SK-N-SH (cell line): ENCODE measurements at regions of chr4 and their contacts with region 1.

Region 1: GRCh38 chr4:1809754-1810511 is 16.8 kb downstream of the FGFR3 start:
- DNase-seq: peak; percentile 96
- H3K4me3 ChIP-seq: peak overlapping the region in 1 of 2 experiments; percentile 42; a peak in 1 of 4 replicates
- H3K27ac ChIP-seq: no peak overlapping the region
- H3K4me1 ChIP-seq: peaks cover 0 to 3% of the 10 kb centered on the region in 2 experiments; a peak in 1 of 4 replicates
- H3K27me3 ChIP-seq: no peaks in the 10 kb centered on the region
- CTCF ChIP-seq: peak; percentile 93
- EP300 ChIP-seq: no peak
- RAD21 ChIP-seq: peak; percentile 92

Region 2: DNA sequence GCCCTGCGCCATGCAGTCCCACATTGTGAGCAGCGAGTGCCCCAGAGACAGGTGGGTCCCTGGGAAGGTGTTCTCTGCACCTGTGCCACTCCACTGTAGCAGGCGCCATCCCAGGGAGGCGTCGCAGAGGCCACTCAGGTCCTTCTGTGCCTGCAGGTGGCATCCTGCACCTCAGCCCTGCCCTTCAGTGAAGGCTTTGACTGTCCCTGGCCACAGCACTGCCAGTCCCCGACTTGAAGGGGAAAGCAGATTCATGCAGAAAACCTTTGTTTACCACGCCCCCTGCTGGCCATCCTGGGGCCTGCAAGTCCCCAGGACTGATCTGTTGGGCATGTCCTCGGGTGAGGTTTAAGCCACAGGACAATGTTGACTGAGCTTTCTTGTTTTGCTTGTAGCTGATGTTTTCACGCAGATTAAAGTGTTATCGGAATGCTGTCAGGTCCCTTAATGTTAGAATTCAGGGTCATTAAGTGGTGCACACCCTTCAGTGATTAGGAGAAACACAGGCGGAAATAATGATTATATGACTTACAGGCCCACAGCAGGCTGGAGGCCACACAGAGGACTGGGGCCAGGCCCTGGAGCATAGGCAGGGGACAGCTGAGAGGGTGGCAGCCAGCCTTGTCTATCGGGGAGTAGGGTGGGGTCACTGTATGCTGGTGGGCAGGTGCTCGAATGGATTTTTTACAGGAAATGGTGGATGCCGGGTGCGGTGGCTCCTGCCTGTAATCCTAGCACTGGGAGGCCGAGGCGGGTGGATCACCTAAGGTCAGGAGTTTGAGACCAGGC is 83.6 kb before region 1 on chr4:
- CTCF ChIA-PET with region 1: interaction called, 17 read pairs
- POLR2A ChIA-PET with region 1: no interaction called
- DNase-seq: peak; percentile 89
- H3K4me3 ChIP-seq: peak overlapping the region in 1 of 2 experiments; percentile 22; a peak in 1 of 4 replicates
- H3K27ac ChIP-seq: peak overlapping the region; percentile 73 to 82
- H3K4me1 ChIP-seq: peaks cover 26 to 28% of the 10 kb centered on the region in 2 experiments; a peak in 3 of 4 replicates
- H3K27me3 ChIP-seq: no peaks in the 10 kb centered on the region
- CTCF ChIP-seq: peak; percentile 97
- EP300 ChIP-seq: no peak
- RAD21 ChIP-seq: peak; percentile 82

Region 3: GRCh38 chr4:1752284-1753041 is 57.5 kb before region 1 on chr4:
- CTCF ChIA-PET with region 1: interaction called, 166 read pairs
- POLR2A ChIA-PET with region 1: no interaction called
- DNase-seq: no peak
- H3K4me3 ChIP-seq: no peak overlapping the region
- H3K27ac ChIP-seq: no peak overlapping the region
- H3K4me1 ChIP-seq: peaks cover 0 to 35% of the 10 kb centered on the region in 2 experiments; a peak in 1 of 4 replicates
- H3K27me3 ChIP-seq: no peaks in the 10 kb centered on the region
- CTCF ChIP-seq: no peak
- EP300 ChIP-seq: no peak
- RAD21 ChIP-seq: no peak

Region 4: GRCh38 chr4:1777822-1778641 is 31.9 kb before region 1 on chr4:
- CTCF ChIA-PET with region 1: interaction called, 29 read pairs
- POLR2A ChIA-PET with region 1: no interaction called
- DNase-seq: no peak
- H3K4me3 ChIP-seq: no peak overlapping the region
- H3K27ac ChIP-seq: no peak overlapping the region
- H3K4me1 ChIP-seq: peaks cover 0 to 27% of the 10 kb centered on the region in 2 experiments; a peak in 1 of 4 replicates
- H3K27me3 ChIP-seq: no peaks in the 10 kb centered on the region
- CTCF ChIP-seq: no peak
- EP300 ChIP-seq: no peak
- RAD21 ChIP-seq: no peak

Region 5: DNA sequence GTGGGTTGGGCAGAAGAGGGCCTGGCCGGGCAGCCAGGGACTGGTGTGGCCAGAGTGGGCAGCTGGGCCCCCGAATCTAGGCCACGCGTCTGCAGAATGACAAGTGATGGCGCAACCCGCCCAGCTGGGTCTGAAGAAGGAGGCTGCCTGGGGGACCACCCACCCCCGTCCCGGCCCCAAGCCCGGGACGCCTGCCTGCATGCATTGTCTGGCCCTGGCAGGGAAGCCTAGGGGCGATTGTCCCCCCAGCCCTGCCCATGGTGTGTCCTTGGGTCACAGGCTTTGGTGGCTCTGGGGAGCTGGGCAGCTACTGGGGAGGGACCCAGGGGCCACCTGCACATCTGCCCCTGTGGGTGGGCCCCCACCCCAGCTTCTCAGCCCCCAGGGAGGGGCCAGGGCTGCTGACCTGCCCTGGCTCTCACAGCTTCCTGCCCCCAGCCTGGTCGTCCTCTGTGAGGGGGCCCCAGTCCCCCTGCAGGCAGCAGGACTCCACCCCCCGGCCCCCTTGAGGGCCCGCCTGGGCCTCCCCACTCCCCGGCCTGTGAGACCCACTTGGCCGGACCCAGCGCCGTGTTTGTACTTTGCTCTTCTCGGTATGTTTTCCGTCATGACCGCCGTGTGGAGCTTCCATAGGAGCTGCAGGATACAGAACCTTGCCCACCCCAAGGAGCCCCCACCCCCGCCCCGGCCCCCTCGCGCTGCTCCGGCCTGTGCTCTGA is 11.9 kb before region 1 on chr4:
- CTCF ChIA-PET with region 1: interaction called, 35 read pairs
- POLR2A ChIA-PET with region 1: no interaction called
- DNase-seq: no peak
- H3K4me3 ChIP-seq: no peak overlapping the region
- H3K27ac ChIP-seq: no peak overlapping the region
- H3K4me1 ChIP-seq: no peaks in the 10 kb centered on the region; a peak in 1 of 4 replicates
- H3K27me3 ChIP-seq: peaks cover 12% of the 10 kb centered on the region
- CTCF ChIP-seq: no peak
- EP300 ChIP-seq: no peak
- RAD21 ChIP-seq: no peak